Mammary epithelial cell (primary cell): ENCODE measurements at regions of chr2 and their contacts with region 1.

Region 1: GRCh38 chr2:143110758-143111428 is 18.3 kb upstream of the ARHGAP15 start:
- DNase-seq: peak; percentile 45
- H3K4me3 ChIP-seq: no peak overlapping the region
- H3K27ac ChIP-seq: no peak overlapping the region
- H3K4me1 ChIP-seq: peaks cover 7% of the 10 kb centered on the region
- H3K27me3 ChIP-seq: no peaks in the 10 kb centered on the region
- CTCF ChIP-seq: peak; percentile 70 to 74

Region 2: GRCh38 chr2:143075711-143076110 is 35.2 kb before region 1 on chr2:
- CTCF ChIA-PET with region 1: no interaction called
- dilution Hi-C with region 1: no loop called
- in situ Hi-C with region 1: no loop called
- intact Hi-C with region 1: loop called (anchors 2 kb)
- DNase-seq: no peak
- H3K4me3 ChIP-seq: no peak overlapping the region
- H3K27ac ChIP-seq: no peak overlapping the region
- H3K4me1 ChIP-seq: peaks cover 17% of the 10 kb centered on the region
- H3K27me3 ChIP-seq: no peaks in the 10 kb centered on the region
- CTCF ChIP-seq: no peak